ENCODE measurements at regions of chr1 and their contacts with region 1.

Region 1: GRCh38 chr1:147640553-147641165 is 29.7 kb downstream of the ACP6 start:
- DNase-seq: peak; percentile 22 to 85 (median 59)

Region 2: GRCh38 chr1:147142886-147143285 is 497.8 kb before region 1 on chr1:
- intact Hi-C with region 1: no loop called
- DNase-seq: no peak

Region 3: GRCh38 chr1:147560756-147561471 is 79.7 kb before region 1 on chr1:
- intact Hi-C with region 1: no loop called
- DNase-seq: no peak

Region 4: GRCh38 chr1:147700042-147701006 is 59.7 kb after region 1 on chr1:
- intact Hi-C with region 1: loop called (anchors 10 kb)
- DNase-seq: peak; percentile 22 to 89 (median 70)

Measured in head of caudate nucleus (tissue), 42 donors.